Activated CD4-positive, alpha-beta memory T cell treated with anti-CD3 and anti-CD28 coated beads, Interleukin-2, amount 10 ng/mL, durations not matched to agents 7 days and 5 days (primary cell): ENCODE measurements at regions of chr16 and their contacts with region 1.

Region 1: GRCh38 chr16:22098405-22099255 is 6.3 kb downstream of the VWA3A start:
- DNase-seq: no peak
- H3K4me3 Mint-ChIP-seq: no peak overlapping the region
- H3K27ac Mint-ChIP-seq: no peak overlapping the region
- H3K4me1 Mint-ChIP-seq: peaks cover 1% of the 10 kb centered on the region
- H3K27me3 Mint-ChIP-seq: peaks cover 25% of the 10 kb centered on the region

Region 2: DNA sequence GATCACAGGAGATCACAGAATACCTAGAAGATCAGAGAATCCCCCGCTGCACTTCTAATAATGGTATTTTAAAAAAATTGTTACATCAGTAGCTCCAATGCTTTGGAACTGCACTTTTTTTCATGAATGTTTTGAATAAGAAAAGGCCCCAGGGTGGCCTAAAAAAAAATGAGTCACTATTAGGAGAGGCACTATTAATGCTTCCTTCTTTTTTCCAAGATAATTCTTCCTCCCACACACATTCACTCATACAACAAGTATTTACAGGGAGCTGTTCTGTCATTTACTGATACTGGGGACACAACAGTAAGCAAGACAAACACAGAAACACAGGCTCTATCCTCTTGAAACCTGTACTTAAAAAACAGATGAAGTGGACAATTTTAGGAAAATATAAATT is 97.0 kb before region 1 on chr16:
- CTCF ChIA-PET with region 1: interaction called, 19 read pairs
- POLR2A ChIA-PET with region 1: no interaction called
- DNase-seq: no peak
- H3K4me3 Mint-ChIP-seq: no peak overlapping the region
- H3K27ac Mint-ChIP-seq: no peak overlapping the region
- H3K4me1 Mint-ChIP-seq: peaks cover 11% of the 10 kb centered on the region
- H3K27me3 Mint-ChIP-seq: no peaks in the 10 kb centered on the region

Region 3: GRCh38 chr16:22109258-22109898 is 10.7 kb after region 1 on chr16:
- CTCF ChIA-PET with region 1: interaction called, 16 read pairs
- POLR2A ChIA-PET with region 1: no interaction called
- DNase-seq: no peak
- H3K4me3 Mint-ChIP-seq: no peak overlapping the region
- H3K27ac Mint-ChIP-seq: no peak overlapping the region
- H3K4me1 Mint-ChIP-seq: no peaks in the 10 kb centered on the region
- H3K27me3 Mint-ChIP-seq: peaks cover 18% of the 10 kb centered on the region

Region 4: DNA sequence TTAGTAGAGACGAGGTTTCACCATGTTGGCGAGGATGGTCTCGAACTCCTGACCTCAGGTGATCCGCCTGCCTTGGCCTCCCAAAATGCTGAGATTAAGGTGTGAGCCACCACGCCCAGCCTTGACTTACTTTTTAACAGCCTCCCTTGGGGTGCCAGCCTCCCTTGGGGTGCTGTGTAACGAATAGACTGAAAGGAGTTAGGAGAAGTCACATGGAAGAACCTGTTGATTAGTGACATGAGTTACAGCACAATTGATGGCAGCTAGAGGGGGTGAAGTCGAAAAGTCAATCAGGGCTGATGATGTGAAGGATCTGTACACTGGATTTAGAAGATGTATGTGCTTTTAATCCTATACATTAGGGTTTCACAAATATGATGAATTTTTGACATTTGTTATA is 315.2 kb after region 1 on chr16:
- CTCF ChIA-PET with region 1: no interaction called
- POLR2A ChIA-PET with region 1: no interaction called
- DNase-seq: no peak
- H3K4me3 Mint-ChIP-seq: no peak overlapping the region
- H3K27ac Mint-ChIP-seq: no peak overlapping the region
- H3K4me1 Mint-ChIP-seq: no peaks in the 10 kb centered on the region
- H3K27me3 Mint-ChIP-seq: no peaks in the 10 kb centered on the region